IMR-90 (cell line): ENCODE measurements at regions of chr13 and their contacts with region 1.

Region 1: GRCh38 chr13:40221460-40222201 is 444.8 kb downstream of the FOXO1 start:
- DNase-seq: no peak
- ATAC-seq: no peak
- H3K4me3 ChIP-seq: no peak overlapping the region
- H3K27ac ChIP-seq: no peak overlapping the region
- H3K4me1 ChIP-seq: no peaks in the 10 kb centered on the region
- H3K27me3 ChIP-seq: no peaks in the 10 kb centered on the region
- CTCF ChIP-seq: no peak
- POLR2A ChIP-seq: no peak
- RAD21 ChIP-seq: no peak

Region 2: DNA sequence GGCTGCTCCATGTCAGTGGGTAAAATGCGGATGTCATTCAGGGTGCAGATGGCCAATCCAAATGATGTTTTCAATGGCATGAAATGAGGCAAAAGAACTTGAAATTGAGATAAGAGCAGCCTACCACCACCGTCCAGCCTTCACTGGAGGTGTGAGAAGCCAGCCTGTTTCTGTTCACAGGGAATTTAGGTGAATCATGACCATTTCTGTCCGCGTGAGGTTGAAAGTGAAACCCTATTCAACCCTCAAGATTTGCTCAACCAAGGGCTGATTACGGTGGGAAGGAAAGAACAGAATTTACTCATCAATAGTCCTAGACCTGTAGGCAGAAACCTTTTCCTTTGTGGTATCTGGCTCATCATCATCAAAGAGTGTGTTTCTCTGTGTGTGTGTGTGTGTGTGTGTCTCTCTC is 195.5 kb before region 1 on chr13:
- CTCF ChIA-PET with region 1: no interaction called
- POLR2A ChIA-PET with region 1: no interaction called
- dilution Hi-C with region 1: no loop called
- in situ Hi-C with region 1: no loop called
- intact Hi-C with region 1: no loop called
- DNase-seq: peak; percentile 11
- ATAC-seq: no peak
- H3K4me3 ChIP-seq: no peak overlapping the region
- H3K27ac ChIP-seq: no peak overlapping the region
- H3K4me1 ChIP-seq: no peaks in the 10 kb centered on the region
- H3K27me3 ChIP-seq: no peaks in the 10 kb centered on the region
- CTCF ChIP-seq: no peak
- POLR2A ChIP-seq: no peak
- RAD21 ChIP-seq: no peak

Region 3: GRCh38 chr13:40344270-40345148 is 122.9 kb after region 1 on chr13:
- CTCF ChIA-PET with region 1: no interaction called
- POLR2A ChIA-PET with region 1: interaction called, 11 read pairs
- dilution Hi-C with region 1: no loop called
- in situ Hi-C with region 1: no loop called
- intact Hi-C with region 1: no loop called
- DNase-seq: no peak
- ATAC-seq: no peak
- H3K4me3 ChIP-seq: no peak overlapping the region
- H3K27ac ChIP-seq: no peak overlapping the region
- H3K4me1 ChIP-seq: no peaks in the 10 kb centered on the region
- H3K27me3 ChIP-seq: no peaks in the 10 kb centered on the region
- CTCF ChIP-seq: no peak
- POLR2A ChIP-seq: no peak
- RAD21 ChIP-seq: no peak